Transverse colon (tissue), 4 donors: ENCODE measurements at regions of chr21 and their contacts with region 1.

Region 1: DNA sequence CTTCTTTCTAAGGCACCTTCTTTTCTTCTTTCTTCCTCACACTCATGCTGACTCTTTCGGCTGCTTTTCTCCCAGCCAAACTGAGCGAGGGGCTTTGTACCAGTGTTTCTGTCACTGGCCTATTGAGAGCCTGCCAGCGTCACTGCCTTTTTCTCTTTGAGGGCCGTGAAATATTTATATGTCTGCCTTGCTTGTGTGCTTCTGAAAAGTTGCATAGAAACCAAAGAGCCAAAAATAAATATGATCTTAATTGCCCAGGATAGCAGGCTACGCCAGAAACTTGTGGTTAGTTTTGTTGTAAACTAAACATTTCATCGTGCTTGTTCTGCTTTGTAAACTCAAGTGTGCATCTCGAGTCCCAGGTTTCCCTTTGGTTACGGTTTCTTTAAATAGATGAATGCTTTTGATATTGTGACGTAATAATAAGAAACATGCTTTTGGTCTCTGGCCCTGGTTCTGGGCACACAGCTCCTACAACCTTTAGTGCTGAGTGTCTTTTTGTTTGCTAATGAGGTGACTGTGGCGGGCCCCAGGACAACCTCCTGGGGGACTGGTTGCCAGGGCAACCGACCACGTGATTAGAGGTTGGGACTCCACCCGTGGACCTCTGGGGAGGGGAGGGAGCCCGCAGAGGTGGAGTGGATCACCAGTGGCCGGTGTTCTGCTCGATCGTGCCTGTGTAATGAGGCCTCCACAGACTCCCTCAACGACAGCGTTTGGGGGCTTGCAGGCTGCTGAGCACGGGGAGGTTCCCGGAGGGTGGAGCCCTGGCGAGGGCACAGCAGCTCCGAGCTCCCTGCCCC is 10.9 kb downstream of the SLC37A1 start:
- DNase-seq: peak; percentile 81
- H3K4me3 ChIP-seq: peak overlapping the region in 2 of 4 donors; percentile 5 to 28
- H3K27ac ChIP-seq: peak overlapping the region; percentile 81 to 86 (median 84)
- H3K4me1 ChIP-seq: peaks cover 42 to 56% (median 55%) of the 10 kb centered on the region in 4 donors
- H3K27me3 ChIP-seq: no peaks in the 10 kb centered on the region
- CTCF ChIP-seq: no peak
- EP300 ChIP-seq: no peak
- POLR2A ChIP-seq: no peak

Region 2: GRCh38 chr21:42892931-42893755 is 368.6 kb after region 1 on chr21 and contains the start of gene NDUFV3:
- in situ Hi-C with region 1: no loop called
- intact Hi-C with region 1: loop called (anchors 5 kb)
- DNase-seq: peak; percentile 100
- H3K4me3 ChIP-seq: peak within 1 kb of the TSS; percentile 75 to 99 (median 82)
- H3K27ac ChIP-seq: peak within 1 kb of the TSS; percentile 94 to 99 (median 97)
- H3K4me1 ChIP-seq: peaks cover 0 to 16% (median 2%) of the 10 kb centered on the region in 4 donors
- H3K27me3 ChIP-seq: no peaks in the 10 kb centered on the region
- CTCF ChIP-seq: no peak
- EP300 ChIP-seq: no peak
- POLR2A ChIP-seq: peak; percentile 97
- total RNA-seq, gene NDUFV3: 45.6 to 82.8 (median 64.1) TPM

Region 3: DNA sequence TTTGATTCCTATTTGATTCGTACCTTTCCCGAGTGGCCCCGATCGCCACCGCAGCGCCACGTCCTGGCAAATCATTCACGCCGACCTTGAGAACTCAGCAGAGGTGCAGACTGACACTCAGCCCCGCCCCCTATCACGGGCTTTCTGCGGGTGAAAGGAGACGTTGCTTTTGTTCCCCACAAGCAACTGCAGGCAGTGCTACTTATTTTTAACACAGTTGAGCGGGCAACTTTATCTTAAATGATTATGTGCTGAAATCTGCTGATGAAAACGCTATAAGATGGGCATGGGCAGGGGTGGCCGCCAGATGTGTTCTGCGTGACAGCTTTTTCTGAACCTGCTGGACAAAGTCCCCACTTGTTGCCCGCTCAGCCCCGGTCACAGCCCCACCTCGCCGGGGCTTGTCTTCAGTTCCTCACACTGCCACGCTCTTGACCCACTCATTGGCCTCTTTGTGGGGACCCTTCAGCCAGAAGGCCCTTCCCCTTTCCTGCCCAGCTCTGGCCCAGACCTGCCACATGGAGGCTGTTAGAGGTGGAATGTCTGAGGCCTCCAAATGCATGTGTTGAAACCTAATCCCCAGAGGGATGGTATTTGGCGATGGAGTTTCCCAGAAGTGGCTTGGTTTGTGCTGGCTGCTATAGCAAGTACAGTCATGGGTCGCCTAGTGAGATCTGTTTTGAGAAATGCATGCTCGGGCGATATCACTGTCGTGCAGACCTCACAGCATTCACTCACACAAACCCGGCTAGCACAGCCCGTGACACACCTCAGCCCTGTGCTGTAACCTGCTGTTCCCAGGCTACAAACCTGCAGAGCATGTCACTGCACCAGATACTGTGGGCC is 1178.7 kb after region 1 on chr21:
- in situ Hi-C with region 1: no loop called
- intact Hi-C with region 1: no loop called
- DNase-seq: peak; percentile 78
- H3K4me3 ChIP-seq: no peak overlapping the region
- H3K27ac ChIP-seq: no peak overlapping the region
- H3K4me1 ChIP-seq: peaks cover 4 to 10% (median 5%) of the 10 kb centered on the region in 4 donors
- H3K27me3 ChIP-seq: no peaks in the 10 kb centered on the region
- CTCF ChIP-seq: no peak
- EP300 ChIP-seq: no peak
- POLR2A ChIP-seq: no peak